ENCODE measurements at regions of chr20 and their contacts with region 1.

Region 1: DNA sequence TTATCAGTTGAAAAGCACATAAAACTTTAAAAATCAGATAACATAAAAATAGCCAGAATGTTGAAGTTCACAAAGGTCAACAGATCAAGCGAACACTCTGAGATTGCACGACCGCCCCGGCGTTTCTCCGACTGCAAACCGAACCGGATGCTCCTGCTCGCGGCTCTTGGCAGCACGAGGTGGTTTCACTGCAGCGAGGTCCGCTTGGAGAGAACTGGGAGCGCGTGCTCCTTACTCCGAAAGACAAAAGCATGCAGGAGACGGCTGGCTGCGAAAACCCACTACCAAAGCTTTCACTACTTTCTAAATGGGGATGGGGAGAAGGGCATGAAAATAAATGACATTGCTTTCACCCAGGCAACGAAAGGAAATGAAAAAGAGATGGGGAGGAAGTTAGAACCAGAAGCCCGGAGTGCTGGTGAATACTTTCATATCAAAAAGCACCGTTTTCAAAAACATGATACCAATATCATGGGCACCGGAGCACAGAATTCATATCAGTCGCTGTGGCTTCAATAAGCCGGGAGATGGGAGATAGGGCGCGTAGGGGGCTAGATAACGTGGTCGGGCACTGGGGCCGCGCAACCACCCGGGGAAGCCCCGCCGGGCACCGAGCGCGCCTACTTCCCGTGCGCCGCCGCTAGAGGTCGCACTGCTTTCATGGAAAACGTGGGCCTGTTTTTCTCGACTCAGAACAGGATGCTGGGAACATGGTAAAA is 8.3 kb upstream of the ANKRD60 start:
- H3K4me3 Mint-ChIP-seq: peak overlapping the region; percentile 84
- H3K27ac Mint-ChIP-seq: peak overlapping the region; percentile 63
- H3K4me1 Mint-ChIP-seq: peaks cover 9% of the 10 kb centered on the region
- H3K27me3 Mint-ChIP-seq: peaks cover 3% of the 10 kb centered on the region

Region 2: DNA sequence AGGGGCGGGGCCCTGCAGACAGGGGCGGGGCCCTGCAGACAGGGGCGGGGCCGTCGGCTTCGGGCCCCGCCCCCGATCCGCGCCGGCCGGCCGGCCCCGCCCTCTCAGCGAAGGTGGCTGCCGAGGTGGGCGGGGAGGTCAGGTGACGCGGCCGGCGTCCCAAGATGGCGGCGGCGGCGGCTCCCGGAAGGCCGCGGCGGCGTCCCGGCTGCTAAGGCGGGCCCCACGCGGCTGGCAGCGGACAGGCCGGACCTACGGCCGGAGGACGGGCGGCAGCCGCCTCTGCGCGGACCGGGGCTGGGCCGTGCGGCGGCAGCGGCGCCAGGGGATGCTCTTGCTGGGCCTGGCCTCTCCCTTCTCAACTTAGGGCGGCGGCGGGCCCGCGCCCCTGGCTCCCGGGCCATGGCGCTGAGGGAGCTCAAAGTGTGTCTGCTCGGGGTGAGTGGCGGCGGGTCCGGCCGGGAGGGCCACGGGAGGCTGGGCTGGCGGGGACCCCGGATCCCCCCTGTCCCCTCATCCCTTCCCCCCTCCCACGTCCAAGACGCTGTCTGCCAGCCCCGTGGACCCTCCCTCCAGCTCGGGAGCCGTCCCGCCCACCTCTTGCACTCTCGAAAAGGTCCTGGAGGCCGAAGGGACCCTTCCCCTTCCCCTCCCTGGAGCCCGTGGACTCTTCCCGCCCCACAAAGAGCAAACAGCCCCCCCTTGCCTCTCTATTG is 73.0 kb after region 1 on chr20 and contains the start of gene RAB22A:
- intact Hi-C with region 1: loop called (anchors 5 kb)
- H3K4me3 Mint-ChIP-seq: peak within 1 kb of the TSS; percentile 87
- H3K27ac Mint-ChIP-seq: peak within 1 kb of the TSS; percentile 91
- H3K4me1 Mint-ChIP-seq: peaks cover 51% of the 10 kb centered on the region
- H3K27me3 Mint-ChIP-seq: peaks cover 1% of the 10 kb centered on the region

Region 3: DNA sequence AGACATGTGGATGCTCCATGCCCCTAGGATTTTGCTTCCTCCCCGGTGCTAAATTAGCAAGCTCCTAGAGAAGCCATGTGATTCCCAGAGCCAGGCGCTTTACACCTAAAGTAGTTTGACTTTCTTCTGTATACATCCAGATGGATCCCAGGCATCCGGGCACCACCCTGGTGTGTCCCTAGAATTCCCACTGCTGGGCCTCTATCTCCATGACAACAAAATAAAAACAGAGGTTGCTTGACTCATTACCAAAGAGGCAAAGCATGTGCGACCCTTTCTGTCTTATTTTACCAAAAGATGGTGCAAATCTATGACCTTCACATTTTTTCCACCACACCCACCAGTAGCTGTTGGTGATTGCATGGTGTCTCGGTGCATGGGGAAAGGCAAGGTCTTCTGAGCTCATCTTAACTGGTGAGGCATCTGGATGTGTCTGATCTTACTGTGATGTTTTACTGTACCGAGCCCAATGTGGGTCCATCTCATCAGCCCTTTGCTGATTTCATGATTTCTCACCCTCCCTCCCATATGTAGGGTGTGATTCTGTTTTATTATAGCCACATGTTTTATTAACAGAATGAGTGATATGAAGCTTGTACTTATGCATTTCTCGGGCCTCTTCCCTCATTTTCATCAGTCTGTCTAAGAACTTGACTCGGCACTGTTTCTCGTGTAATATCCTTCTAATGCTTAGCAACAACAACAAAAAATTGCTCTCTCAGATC is 124.9 kb after region 1 on chr20:
- intact Hi-C with region 1: loop called (anchors 10 kb)
- H3K4me3 Mint-ChIP-seq: no peak overlapping the region
- H3K27ac Mint-ChIP-seq: no peak overlapping the region
- H3K4me1 Mint-ChIP-seq: peaks cover 6% of the 10 kb centered on the region
- H3K27me3 Mint-ChIP-seq: no peaks in the 10 kb centered on the region

Region 4: GRCh38 chr20:58447511-58448391 is 211.0 kb after region 1 on chr20:
- intact Hi-C with region 1: loop called (anchors 2 kb)
- H3K4me3 Mint-ChIP-seq: no peak overlapping the region
- H3K27ac Mint-ChIP-seq: no peak overlapping the region
- H3K4me1 Mint-ChIP-seq: no peaks in the 10 kb centered on the region
- H3K27me3 Mint-ChIP-seq: no peaks in the 10 kb centered on the region

Measured in dendritic cell treated with granulocyte-macrophage colony-stimulating factor and Interleukin-4, amounts not matched to agents 40 ng/mL and 50 ng/mL, for 4 days (primary cell).